Activated CD8-positive, alpha-beta memory T cell treated with anti-CD3 and anti-CD28 coated beads, Interleukin-2, amount 10 ng/mL, durations not matched to agents 7 days and 5 days (primary cell): ENCODE measurements at regions of chr19 and their contacts with region 1.

Region 1: DNA sequence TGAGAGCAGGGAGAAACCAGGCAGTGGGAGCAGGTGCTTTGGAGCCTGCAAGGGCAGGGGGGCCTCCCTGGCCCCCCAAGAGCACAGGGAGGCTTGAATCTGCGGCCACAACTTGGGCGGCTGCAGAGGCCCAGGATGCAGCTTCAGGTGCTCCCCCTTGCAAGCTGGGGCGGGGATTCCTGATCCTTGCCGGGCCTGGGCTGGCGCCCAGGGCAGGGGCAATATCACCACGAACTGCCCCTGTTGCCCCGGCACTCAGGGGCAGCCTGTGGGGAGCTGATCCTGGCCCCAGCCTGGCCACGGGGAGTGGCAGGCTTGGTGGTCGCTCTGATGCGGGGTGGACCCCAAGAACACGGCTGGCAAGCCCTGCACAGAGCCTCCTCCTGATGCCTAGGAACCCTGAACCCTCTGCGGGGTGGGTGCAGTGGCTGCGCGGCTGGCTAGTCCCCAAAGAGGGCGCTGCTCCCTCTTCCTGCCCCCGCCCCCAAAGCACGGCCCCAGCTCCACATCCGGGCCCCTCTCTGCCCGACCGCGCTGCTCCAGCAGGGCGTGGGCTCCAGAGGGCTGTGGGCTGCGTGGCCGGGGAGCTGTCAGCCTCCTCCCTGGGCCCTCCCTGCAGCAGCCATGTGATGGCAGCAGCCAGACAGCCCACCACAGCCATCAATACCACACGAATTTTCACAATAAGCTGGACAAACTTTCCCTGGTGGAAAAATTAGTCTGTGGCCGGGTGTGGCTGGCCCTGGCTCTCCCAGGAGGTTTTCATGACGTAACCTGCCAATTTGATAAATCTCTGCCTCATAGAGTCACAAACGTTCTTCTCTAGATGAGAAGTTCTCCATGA is 21.0 kb downstream of the TNFSF9 start:
- DNase-seq: peak; percentile 89
- ATAC-seq: peak; percentile 98
- H3K4me3 Mint-ChIP-seq: no peak overlapping the region
- H3K27ac Mint-ChIP-seq: peak overlapping the region; percentile 57
- H3K4me1 Mint-ChIP-seq: peaks cover 30% of the 10 kb centered on the region
- H3K27me3 Mint-ChIP-seq: peaks cover 3% of the 10 kb centered on the region

Region 2: GRCh38 chr19:6534451-6535100 is 17.3 kb before region 1 on chr19:
- CTCF ChIA-PET with region 1: interaction called, 43 read pairs
- DNase-seq: no peak
- ATAC-seq: no peak
- H3K4me3 Mint-ChIP-seq: no peak overlapping the region
- H3K27ac Mint-ChIP-seq: no peak overlapping the region
- H3K4me1 Mint-ChIP-seq: peaks cover 55% of the 10 kb centered on the region
- H3K27me3 Mint-ChIP-seq: peaks cover 28% of the 10 kb centered on the region

Region 3: DNA sequence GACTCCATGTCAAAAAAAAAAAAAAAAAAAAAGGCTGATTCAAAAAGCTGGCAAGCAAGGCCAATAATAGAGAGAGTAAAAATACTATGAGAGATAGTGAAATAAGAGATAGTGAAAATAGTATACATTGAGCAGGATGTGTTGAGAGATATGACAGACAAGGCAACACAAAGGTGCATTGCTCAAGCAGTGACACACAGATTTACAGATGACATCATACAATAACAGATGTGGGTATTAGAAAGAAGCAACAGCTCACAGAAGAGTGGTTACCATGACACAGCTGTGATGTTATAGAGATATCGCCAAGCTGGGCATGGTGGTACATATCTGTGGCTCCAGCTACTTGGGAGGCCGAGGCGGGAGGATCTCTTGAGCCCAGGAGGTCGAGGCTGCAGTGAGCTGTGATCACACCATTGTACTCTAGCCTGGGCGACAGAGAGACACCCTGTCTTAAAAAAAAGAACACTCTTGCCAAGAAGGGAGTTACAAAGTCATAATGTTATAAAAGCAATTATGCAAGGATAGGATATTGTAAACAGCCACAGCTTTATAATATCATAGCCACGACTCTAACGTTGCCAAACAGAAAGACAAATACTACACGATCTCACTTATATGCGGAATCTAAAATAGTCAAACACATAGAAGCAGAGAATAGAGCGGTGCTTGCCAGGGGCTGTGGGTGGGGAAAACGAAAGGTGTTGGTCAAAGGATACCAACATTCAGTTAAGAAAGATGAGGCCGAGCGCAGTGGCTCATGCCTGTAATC is 10.7 kb before region 1 on chr19:
- CTCF ChIA-PET with region 1: interaction called, 43 read pairs
- DNase-seq: no peak
- ATAC-seq: no peak
- H3K4me3 Mint-ChIP-seq: no peak overlapping the region
- H3K27ac Mint-ChIP-seq: no peak overlapping the region
- H3K4me1 Mint-ChIP-seq: peaks cover 27% of the 10 kb centered on the region
- H3K27me3 Mint-ChIP-seq: no peaks in the 10 kb centered on the region

Region 4: GRCh38 chr19:6572217-6572616 is 20.4 kb after region 1 on chr19:
- CTCF ChIA-PET with region 1: interaction called, 10 read pairs
- DNase-seq: no peak
- ATAC-seq: no peak
- H3K4me3 Mint-ChIP-seq: no peak overlapping the region
- H3K27ac Mint-ChIP-seq: no peak overlapping the region
- H3K4me1 Mint-ChIP-seq: no peaks in the 10 kb centered on the region
- H3K27me3 Mint-ChIP-seq: peaks cover 35% of the 10 kb centered on the region

Region 5: DNA sequence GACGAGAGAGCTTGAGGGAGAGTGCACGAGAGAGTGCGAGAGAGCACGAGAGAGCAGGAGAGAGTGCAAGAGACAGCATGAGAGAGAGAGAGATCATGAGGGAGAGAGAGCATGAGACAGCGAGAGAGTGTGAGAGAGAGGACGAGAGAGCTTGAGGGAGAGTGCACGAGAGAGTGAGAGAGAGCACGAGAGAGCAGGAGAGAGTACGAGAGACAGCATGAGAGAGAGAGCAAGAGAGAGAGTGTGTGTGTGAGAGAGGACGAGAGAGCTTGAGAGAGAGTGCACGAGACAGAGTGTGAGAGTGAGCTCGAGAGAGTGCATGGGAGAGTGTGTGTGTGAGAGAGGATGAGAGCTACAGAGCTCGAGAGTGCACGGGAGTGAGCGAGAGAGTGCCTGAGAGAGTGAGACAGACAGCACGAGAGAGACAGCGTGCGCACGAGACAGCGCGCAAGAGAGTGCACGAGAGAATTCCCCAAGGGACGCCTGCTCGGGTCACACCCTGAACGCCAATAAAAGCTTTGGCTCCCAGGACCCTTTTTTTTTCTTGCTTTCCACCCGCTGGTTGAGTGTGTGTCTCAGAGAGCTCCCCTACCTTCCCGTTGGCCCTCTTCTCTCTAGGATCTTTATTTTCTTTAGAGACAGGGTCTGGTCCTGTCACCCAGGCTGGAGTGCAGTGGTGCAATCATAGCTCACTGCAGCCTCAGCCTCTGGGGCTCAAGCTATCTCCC is 35.4 kb after region 1 on chr19:
- CTCF ChIA-PET with region 1: interaction called, 16 read pairs
- DNase-seq: no peak
- ATAC-seq: peak; percentile 7
- H3K4me3 Mint-ChIP-seq: peak overlapping the region; percentile 97
- H3K27ac Mint-ChIP-seq: peak overlapping the region; percentile 64
- H3K4me1 Mint-ChIP-seq: peaks cover 54% of the 10 kb centered on the region
- H3K27me3 Mint-ChIP-seq: peaks cover 26% of the 10 kb centered on the region

Region 6: DNA sequence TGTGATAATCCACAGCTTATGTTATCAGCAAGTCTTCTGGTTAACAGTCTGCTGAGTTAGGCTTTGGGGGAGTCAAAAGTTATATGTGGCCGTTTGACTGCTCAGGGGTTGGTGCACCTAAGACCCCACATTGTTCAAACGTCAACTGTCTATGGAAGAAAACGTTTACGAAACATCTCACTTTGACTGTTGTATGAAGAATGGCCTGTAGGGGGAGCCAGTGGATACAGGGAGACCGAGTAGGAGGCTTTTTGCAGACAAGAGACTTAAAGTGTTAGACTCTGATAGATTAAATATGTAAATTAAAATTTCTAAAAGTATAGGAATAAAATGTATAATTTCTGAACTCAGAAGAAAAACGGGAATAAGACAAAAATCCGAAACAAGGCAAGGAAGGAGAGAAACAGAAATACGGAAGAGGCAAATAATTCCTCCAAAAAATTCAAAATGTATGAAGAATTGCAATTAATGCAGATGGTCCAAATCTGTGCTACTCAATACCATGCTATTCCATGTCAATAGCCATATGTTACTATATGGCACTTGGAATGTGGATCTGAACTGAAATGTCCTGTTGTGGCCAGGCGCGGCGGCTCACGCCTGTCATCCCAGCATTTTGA is 80.3 kb after region 1 on chr19:
- CTCF ChIA-PET with region 1: no interaction called
- DNase-seq: peak; percentile 89
- ATAC-seq: peak; percentile 85
- H3K4me3 Mint-ChIP-seq: no peak overlapping the region
- H3K27ac Mint-ChIP-seq: peak overlapping the region; percentile 52
- H3K4me1 Mint-ChIP-seq: peaks cover 30% of the 10 kb centered on the region
- H3K27me3 Mint-ChIP-seq: no peaks in the 10 kb centered on the region